ENCODE measurements at regions of chr17 and their contacts with region 1.

Region 1: GRCh38 chr17:50139950-50140871 is 10.3 kb upstream of the SAMD14 start:
- DNase-seq: no peak
- H3K4me3 ChIP-seq: no peak overlapping the region
- H3K27me3 ChIP-seq: no peaks in the 10 kb centered on the region
- CTCF ChIP-seq: peak; percentile 95

Region 2: DNA sequence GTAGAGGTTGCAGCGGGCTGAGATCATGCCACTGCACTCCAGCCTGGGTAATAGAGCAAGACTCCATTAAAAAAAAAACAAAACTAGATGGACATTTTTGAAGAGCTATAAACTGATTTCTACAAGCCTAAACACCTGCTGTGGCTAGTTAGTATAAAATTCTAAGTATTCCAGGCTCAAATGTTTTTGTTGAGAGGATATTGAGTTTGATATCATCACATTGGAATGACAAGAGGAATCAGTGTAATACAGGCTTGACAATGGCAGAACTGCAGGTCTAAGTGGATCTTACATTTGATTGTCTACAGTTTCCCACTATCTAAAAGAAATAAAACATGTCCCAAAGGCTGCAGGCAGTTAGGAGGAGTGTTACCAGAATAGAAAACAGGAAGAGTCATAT is 121.3 kb before region 1 on chr17:
- CTCF ChIA-PET with region 1: no interaction called
- POLR2A ChIA-PET with region 1: no interaction called
- DNase-seq: no peak
- H3K4me3 ChIP-seq: no peak overlapping the region
- H3K27me3 ChIP-seq: no peaks in the 10 kb centered on the region
- CTCF ChIP-seq: no peak

Region 3: GRCh38 chr17:50129728-50130558 is 10.3 kb before region 1 on chr17 and contains the start of gene SAMD14:
- CTCF ChIA-PET with region 1: interaction called, 20 read pairs
- POLR2A ChIA-PET with region 1: interaction called, 14 read pairs
- DNase-seq: no peak
- H3K4me3 ChIP-seq: peak within 1 kb of the TSS; percentile 54
- H3K27me3 ChIP-seq: no peaks in the 10 kb centered on the region
- CTCF ChIP-seq: no peak
- polyA plus RNA-seq, gene SAMD14: 2.7 and 5.3 TPM in 2 replicates

Region 4: DNA sequence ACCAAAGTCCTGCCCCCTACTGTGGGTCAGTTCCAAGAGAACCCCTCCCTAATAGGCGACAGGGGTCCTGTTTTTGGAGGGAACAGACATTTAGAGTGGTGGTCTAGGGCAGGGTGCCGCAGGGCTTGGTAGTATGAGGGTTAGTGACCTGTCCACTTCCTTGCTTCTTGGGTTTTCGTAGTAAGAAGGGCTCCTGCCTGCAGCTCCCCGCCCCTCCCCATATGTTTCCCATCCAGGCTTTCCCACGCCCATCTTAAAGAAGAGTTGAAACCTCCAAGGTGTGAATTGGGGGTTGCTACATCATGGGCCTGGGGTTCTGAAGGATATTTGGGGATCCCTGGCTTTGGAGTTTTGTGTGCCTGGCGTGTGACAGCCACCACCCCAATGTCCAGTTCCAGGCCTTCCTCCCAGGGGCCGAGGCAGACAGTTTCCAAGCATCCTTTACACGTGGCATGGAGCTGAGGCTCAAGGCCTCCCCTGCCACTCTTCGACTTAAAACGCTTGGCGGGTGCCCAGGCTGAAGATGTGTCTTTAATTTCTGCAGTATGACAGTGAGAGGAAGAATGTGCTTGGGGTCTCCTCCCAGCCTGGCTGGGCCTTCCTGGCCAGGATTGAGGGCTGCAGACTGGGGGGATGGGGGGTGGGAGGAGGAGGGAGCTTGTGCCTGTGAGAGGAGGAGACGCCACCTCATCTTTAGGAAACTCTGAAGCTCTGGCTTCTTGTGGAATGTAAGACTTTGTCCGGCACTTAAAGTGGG is 63.6 kb after region 1 on chr17:
- CTCF ChIA-PET with region 1: no interaction called
- POLR2A ChIA-PET with region 1: no interaction called
- DNase-seq: peak; percentile 99
- H3K4me3 ChIP-seq: peak overlapping the region; percentile 97
- H3K27me3 ChIP-seq: no peaks in the 10 kb centered on the region
- CTCF ChIP-seq: no peak

Region 5: GRCh38 chr17:50238601-50239280 is 98.5 kb after region 1 on chr17:
- CTCF ChIA-PET with region 1: no interaction called
- POLR2A ChIA-PET with region 1: no interaction called
- DNase-seq: no peak
- H3K4me3 ChIP-seq: no peak overlapping the region
- H3K27me3 ChIP-seq: no peaks in the 10 kb centered on the region; the same call in 1 of the 2 replicates
- CTCF ChIP-seq: no peak